ENCODE measurements at regions of chr10 and their contacts with region 1.

Region 1: DNA sequence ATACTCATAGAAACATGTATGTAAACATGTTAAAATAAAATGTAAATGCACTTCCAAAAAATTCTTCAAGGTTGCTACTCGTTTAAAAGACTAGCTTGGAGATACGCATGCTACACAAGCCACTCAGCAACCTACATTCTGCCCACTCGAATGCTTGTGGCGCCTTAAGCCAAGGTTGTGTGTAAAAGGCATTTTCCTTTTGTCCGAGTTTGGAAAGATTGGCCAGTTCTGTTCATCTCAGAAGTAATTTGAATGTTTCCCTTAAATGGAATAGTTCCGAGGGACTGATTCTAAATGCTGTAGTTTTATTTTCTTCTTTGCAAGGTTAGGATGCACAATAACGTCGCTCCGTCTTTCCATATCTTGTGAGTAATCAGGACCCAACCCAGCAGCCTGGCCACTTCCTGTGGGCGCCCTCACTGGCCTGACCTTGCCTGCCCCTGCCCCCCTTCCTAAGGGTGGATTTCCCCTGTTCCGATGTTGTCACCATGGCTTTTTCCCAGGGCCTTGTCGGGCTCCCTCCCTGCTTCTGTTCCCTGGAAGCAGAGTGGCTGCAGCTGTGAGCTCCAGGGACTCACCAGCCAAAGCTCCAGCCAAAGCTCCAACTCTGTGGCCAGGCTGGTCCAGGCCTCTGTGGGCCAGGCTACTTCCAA is 70.6 kb downstream of the PTPRE start:
- DNase-seq: peak; percentile 55 to 77 (median 58)
- ATAC-seq: peak; percentile 73
- H3K4me3 ChIP-seq: no peak overlapping the region
- H3K4me1 ChIP-seq: no peaks in the 10 kb centered on the region
- CTCF ChIP-seq: no peak

Region 2: GRCh38 chr10:127832501-127832900 is 145.0 kb before region 1 on chr10:
- intact Hi-C with region 1: no loop called
- DNase-seq: no peak
- ATAC-seq: no peak
- H3K4me3 ChIP-seq: no peak overlapping the region
- H3K4me1 ChIP-seq: no peaks in the 10 kb centered on the region
- CTCF ChIP-seq: no peak

Region 3: DNA sequence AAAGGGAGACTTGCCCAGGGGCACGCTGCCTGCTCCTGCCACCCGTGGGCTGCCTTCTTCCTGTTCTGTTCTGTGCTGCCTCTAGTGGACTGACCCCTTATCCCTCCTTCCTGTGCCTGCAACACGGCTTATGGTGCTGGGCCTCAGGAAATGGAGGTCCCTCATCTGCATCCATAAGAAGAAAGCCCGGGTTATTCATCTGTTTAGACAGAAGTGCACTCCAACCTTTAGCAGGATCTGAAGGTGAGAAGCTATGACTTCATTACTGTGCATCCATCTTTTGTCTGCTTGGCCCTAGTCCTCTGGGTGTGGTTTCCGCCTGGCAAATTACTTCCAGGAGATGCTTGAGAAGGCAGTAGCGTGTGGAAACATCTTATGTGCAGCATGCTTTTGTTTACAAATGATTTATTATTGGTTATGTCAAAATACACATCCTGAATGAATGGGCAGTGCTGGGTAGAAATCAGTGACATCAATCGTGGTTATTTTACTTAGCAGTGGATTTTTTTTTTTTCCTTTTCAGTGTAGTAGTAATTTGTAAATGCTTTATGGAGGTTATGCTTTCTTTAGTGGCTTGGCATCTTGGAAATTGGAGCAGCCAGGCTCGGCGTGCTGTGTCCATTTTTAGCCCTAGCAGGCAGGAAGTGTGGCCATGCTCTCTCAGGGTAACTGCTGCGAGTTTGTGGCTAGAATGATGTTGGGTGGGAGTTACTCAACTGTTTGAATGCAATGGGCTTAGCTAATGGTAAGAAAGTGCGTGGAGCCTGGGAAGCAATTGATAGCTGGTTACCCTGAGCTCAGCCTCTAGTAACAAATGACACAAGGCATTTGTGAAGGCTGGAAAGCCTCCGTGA is 57.8 kb before region 1 on chr10:
- intact Hi-C with region 1: loop called in 1 of 2 experiments (anchors 5 kb)
- DNase-seq: no peak
- ATAC-seq: peak; percentile 46
- H3K4me3 ChIP-seq: no peak overlapping the region
- H3K4me1 ChIP-seq: no peaks in the 10 kb centered on the region
- CTCF ChIP-seq: no peak

Region 4: GRCh38 chr10:128764190-128764589 is 786.7 kb after region 1 on chr10:
- intact Hi-C with region 1: no loop called
- DNase-seq: no peak
- ATAC-seq: no peak
- H3K4me3 ChIP-seq: no peak overlapping the region
- H3K4me1 ChIP-seq: no peaks in the 10 kb centered on the region
- CTCF ChIP-seq: no peak